ENCODE measurements at regions of chr11 and their contacts with region 1.

Region 1: DNA sequence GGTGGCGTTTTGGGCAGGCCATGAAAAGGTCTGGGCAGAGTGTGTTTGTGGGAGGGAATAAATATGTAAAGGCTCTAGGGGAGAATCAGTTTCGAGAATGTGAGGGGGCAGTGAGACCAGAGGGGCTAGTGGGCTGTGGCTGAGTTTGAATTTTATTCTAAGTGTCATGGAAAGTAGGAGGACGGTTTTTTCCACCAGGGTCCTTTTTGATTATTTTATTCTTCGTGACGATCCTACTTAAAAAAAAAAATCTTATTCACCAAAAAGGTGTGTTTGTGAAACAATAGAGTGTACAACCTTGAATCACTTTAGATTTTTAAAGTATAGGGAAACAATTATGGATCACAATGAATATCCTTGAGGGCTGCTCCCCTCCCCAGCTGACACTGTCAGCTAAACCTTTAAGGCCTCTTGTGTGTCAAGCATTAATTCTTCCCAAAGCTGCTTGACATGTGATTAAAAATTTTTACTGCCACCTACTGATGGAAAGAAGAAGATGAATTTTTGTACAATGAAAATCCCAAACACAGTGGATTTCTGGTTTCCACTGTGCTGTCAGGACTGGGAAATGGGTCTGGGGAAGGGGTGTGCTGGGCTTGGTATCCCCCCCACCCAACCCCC is 107.5 kb upstream of the OR4B1 start:
- DNase-seq: peak in 3 of 10 donors; percentile 31 to 44 (median 33)
- ATAC-seq: peak; percentile 51 to 66
- H3K4me3 Mint-ChIP-seq: peak overlapping the region; percentile 25 to 84 (median 76)
- H3K27ac Mint-ChIP-seq: peak overlapping the region in 9 of 10 donors; percentile 49 to 82 (median 69)
- H3K4me1 Mint-ChIP-seq: peaks cover 18 to 66% (median 30%) of the 10 kb centered on the region in 4 donors
- H3K27me3 Mint-ChIP-seq: no peaks in the 10 kb centered on the region

Region 2: GRCh38 chr11:47932544-47932943 is 176.6 kb before region 1 on chr11:
- POLR2A ChIA-PET with region 1: interaction called, 10 read pairs
- DNase-seq: no peak
- ATAC-seq: no peak
- H3K4me3 Mint-ChIP-seq: no peak overlapping the region
- H3K27ac Mint-ChIP-seq: no peak overlapping the region
- H3K4me1 Mint-ChIP-seq: peaks cover 3 to 38% (median 10%) of the 10 kb centered on the region in 4 donors
- H3K27me3 Mint-ChIP-seq: no peaks in the 10 kb centered on the region

Region 3: GRCh38 chr11:48073031-48073861 is 35.9 kb before region 1 on chr11:
- POLR2A ChIA-PET with region 1: no interaction called
- DNase-seq: no peak
- ATAC-seq: no peak
- H3K4me3 Mint-ChIP-seq: no peak overlapping the region
- H3K27ac Mint-ChIP-seq: peak overlapping the region in 2 of 10 donors; percentile 14 to 58
- H3K4me1 Mint-ChIP-seq: peaks cover 5 to 45% (median 14%) of the 10 kb centered on the region in 4 donors
- H3K27me3 Mint-ChIP-seq: no peaks in the 10 kb centered on the region

Region 4: DNA sequence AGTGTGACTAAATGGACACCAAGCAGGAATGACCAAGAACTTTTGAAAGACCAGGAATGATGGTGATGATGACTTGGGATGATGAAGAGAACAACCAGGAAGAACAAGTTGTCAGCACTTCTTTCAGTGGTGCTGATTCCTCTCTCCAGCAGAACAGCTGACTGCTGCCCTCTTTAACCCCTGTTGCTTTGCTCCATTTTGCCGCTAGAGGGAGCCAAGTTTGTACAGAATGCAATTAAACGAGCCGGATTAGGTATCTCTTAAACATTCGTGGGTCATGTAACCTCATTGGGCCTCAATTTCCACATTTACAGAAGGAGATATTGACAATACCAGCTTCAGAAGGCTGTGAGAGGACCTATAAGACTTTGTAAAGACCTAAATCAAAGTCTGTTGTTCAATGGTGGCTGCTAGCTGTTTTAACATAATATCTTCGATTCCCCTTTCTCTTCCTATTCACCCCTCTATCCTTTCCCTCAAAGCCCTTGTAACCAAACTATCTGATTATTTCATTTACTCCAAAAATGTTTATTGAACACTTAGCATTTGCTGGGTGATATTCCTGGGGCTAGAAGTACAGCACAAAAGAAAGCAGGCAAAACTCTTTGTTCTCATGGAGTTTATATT is 198.7 kb after region 1 on chr11:
- POLR2A ChIA-PET with region 1: no interaction called
- DNase-seq: peak; percentile 26 to 76 (median 54)
- ATAC-seq: peak; percentile 32 to 54
- H3K4me3 Mint-ChIP-seq: no peak overlapping the region
- H3K27ac Mint-ChIP-seq: no peak overlapping the region
- H3K4me1 Mint-ChIP-seq: peaks cover 0 to 5% (median 0%) of the 10 kb centered on the region in 4 donors
- H3K27me3 Mint-ChIP-seq: peaks cover 6 to 29% (median 14%) of the 10 kb centered on the region in 5 donors